Activated CD4-positive, alpha-beta memory T cell treated with anti-CD3 and anti-CD28 coated beads for 36 hours (primary cell): ENCODE measurements at regions of chr9 and their contacts with region 1.

Region 1: DNA sequence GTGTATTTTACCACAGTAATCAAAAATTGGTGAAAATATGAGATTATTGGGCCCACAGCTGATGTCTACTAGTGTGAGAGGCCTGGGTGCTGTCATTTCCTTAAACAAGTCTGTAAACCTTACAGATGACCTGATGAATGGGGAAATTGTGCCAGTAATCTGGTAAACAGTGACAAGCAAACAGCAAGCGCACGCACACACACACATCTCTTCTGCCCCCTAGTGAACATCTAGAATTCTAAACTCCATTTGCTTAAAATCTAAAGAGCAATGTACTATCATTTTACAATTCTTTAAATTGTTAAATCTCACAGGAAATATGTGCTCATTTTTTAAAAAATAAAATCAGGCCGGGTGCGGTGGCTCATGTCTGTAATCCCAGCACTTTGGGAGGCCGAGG is 7.5 kb upstream of the RAPGEF1 start:
- DNase-seq: peak; percentile 51
- H3K4me3 Mint-ChIP-seq: no peak overlapping the region
- H3K27ac Mint-ChIP-seq: peak overlapping the region; percentile 49
- H3K4me1 Mint-ChIP-seq: peaks cover 29% of the 10 kb centered on the region
- H3K27me3 Mint-ChIP-seq: no peaks in the 10 kb centered on the region

Region 2: GRCh38 chr9:131562032-131562959 is 185.1 kb before region 1 on chr9:
- CTCF ChIA-PET with region 1: no interaction called
- POLR2A ChIA-PET with region 1: no interaction called
- intact Hi-C with region 1: no loop called
- DNase-seq: no peak
- H3K4me3 Mint-ChIP-seq: no peak overlapping the region
- H3K27ac Mint-ChIP-seq: no peak overlapping the region
- H3K4me1 Mint-ChIP-seq: peaks cover 12% of the 10 kb centered on the region
- H3K27me3 Mint-ChIP-seq: no peaks in the 10 kb centered on the region

Region 3: DNA sequence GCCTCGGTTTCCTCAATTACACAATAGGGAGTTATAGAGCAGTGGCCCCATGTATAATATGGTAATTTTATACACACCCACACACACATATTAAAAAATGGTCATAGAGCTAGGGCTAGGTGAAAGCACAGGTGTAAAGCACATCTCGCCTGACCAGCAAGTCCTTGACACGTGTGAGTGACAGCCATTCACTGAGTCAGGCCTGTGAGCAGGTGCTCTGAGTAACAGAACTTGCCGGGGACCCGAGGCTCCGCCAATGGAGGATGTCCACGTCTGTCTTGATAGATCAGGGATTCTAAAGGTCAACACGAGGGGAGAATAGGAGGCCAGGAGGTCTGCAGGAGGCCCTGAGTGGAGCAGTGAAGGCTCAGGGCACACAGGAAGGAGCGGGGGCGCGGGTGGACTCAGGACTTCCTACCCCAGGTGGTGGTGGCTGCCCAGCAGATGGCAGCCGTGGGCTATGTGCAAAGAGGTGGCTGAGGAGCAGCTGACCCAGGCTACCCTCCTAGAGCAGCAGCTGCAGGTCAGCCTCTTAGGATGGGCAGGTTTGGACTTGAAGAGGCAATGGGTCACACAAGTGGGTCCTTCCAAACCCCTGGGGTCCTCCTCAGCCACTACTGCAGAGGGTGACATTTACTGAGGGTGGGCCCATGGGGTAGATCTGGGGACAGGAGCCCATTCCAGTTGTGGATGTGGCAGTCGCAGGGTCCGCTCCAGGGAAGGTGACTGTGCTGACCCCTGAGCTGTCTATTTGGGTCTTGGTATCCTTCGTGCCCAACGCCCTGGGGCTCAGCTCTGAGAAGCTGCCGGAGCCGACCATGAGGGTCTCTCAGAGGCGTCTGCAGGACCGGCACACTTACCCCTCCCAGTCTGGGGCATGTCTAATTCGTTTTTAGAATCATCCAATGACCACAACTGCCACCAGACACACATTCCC is 156.2 kb before region 1 on chr9:
- CTCF ChIA-PET with region 1: interaction called, 65 read pairs
- POLR2A ChIA-PET with region 1: no interaction called
- intact Hi-C with region 1: no loop called
- DNase-seq: peak; percentile 87
- H3K4me3 Mint-ChIP-seq: no peak overlapping the region
- H3K27ac Mint-ChIP-seq: peak overlapping the region; percentile 72
- H3K4me1 Mint-ChIP-seq: peaks cover 27% of the 10 kb centered on the region
- H3K27me3 Mint-ChIP-seq: no peaks in the 10 kb centered on the region